Endothelial cell of umbilical vein (primary cell): ENCODE measurements at regions of chr2 and their contacts with region 1.

Region 1: GRCh38 chr2:36322108-36322507 is 33.5 kb upstream of the CRIM1 start:
- DNase-seq: peak; percentile 70
- H3K4me3 ChIP-seq: no peak overlapping the region
- H3K27ac ChIP-seq: no peak overlapping the region
- H3K4me1 ChIP-seq: no peaks in the 10 kb centered on the region
- H3K27me3 ChIP-seq: peaks cover 3% of the 10 kb centered on the region in 2 experiments
- CTCF ChIP-seq: peak; percentile 28 to 60
- POLR2A ChIP-seq: no peak

Region 2: GRCh38 chr2:35871672-35872071 is 450.4 kb before region 1 on chr2:
- CTCF ChIA-PET with region 1: interaction called, 14 read pairs
- POLR2A ChIA-PET with region 1: no interaction called
- dilution Hi-C with region 1: no loop called
- intact Hi-C with region 1: loop called (anchors 5 kb)
- DNase-seq: peak; percentile 4
- H3K4me3 ChIP-seq: no peak overlapping the region
- H3K27ac ChIP-seq: no peak overlapping the region
- H3K4me1 ChIP-seq: no peaks in the 10 kb centered on the region
- H3K27me3 ChIP-seq: peaks cover 3 to 4% of the 10 kb centered on the region in 2 experiments
- CTCF ChIP-seq: peak in 1 of 2 donors; percentile 20
- POLR2A ChIP-seq: no peak

Region 3: DNA sequence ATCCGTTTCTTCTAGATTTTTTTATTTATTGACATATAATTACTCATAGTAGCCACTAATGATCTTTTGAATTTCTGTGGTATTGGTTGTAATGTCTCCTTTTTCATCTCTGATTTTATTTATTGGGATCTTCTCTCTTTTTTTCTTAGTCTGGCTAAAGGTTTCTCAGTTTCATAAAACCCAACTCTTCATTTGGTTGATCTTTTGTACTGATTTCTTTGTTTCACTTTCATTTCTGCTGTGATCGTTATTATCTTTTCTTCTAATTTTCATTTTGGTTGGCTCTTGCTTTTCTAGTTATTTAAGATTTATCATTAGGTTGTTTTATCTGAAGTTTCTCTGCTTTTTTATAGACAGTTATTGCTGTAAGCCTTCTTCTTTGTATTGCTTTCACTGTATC is 430.2 kb before region 1 on chr2:
- CTCF ChIA-PET with region 1: interaction called, 14 read pairs
- POLR2A ChIA-PET with region 1: no interaction called
- dilution Hi-C with region 1: no loop called
- intact Hi-C with region 1: loop called (anchors 1 kb)
- DNase-seq: no peak
- H3K4me3 ChIP-seq: no peak overlapping the region
- H3K27ac ChIP-seq: no peak overlapping the region
- H3K4me1 ChIP-seq: no peaks in the 10 kb centered on the region
- H3K27me3 ChIP-seq: no peaks in the 10 kb centered on the region
- CTCF ChIP-seq: no peak
- POLR2A ChIP-seq: no peak

Region 4: GRCh38 chr2:36307441-36307840 is 14.7 kb before region 1 on chr2:
- CTCF ChIA-PET with region 1: interaction called, 14 read pairs
- POLR2A ChIA-PET with region 1: no interaction called
- dilution Hi-C with region 1: no loop called
- intact Hi-C with region 1: no loop called
- DNase-seq: no peak
- H3K4me3 ChIP-seq: no peak overlapping the region
- H3K27ac ChIP-seq: no peak overlapping the region
- H3K4me1 ChIP-seq: no peaks in the 10 kb centered on the region
- H3K27me3 ChIP-seq: peaks cover 4 to 5% of the 10 kb centered on the region in 2 experiments
- CTCF ChIP-seq: no peak
- POLR2A ChIP-seq: no peak

Region 5: DNA sequence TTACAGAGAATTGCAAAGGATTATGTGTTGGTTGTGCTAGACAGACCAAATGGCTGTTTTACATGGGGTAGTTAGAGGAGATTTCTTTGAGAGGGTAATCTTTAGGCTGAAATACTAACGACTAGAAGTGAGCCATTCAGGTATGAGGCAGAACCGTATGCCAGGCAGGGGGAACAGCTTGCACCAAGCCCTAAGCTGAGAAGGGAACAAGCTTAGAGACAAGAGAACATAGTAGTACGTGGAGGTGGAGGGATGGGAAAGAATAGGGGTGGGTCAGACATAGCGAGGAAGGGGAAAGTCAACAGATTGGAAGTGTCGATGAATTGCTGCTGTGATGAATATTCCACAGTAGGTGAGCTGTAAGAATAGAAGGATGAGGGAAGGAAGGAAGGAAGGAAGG is 13.5 kb after region 1 on chr2:
- CTCF ChIA-PET with region 1: interaction called, 11 read pairs
- POLR2A ChIA-PET with region 1: no interaction called
- dilution Hi-C with region 1: no loop called
- intact Hi-C with region 1: no loop called
- DNase-seq: no peak
- H3K4me3 ChIP-seq: no peak overlapping the region
- H3K27ac ChIP-seq: no peak overlapping the region
- H3K4me1 ChIP-seq: peaks cover 7% of the 10 kb centered on the region
- H3K27me3 ChIP-seq: no peaks in the 10 kb centered on the region
- CTCF ChIP-seq: no peak
- POLR2A ChIP-seq: no peak

Region 6: DNA sequence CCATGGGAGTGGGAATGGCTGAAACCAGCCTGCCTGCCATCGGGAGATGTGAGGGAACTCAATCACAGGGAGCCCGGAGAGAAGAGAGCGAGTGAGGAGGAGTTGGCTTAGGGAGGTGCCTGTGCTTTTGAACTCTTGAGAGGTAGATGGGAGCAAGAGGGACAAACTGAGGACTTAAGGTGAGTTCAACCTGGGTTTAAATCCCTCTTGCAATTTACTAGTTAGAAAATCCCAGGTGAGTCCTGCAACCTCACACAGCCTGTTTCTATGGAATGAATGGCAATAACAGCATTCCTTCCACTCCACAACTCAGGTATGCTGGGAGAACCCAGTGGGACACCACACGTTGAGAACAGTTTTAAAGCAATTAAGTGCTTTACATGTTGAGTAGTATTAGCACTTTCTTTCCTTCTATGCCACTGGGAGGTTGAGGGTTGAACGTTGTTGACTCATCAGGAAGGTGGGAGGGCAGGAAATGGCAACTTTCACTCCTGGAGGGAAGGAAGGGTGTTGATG is 431.7 kb after region 1 on chr2:
- CTCF ChIA-PET with region 1: no interaction called
- POLR2A ChIA-PET with region 1: no interaction called
- dilution Hi-C with region 1: no loop called
- intact Hi-C with region 1: no loop called
- DNase-seq: peak; percentile 43
- H3K4me3 ChIP-seq: no peak overlapping the region
- H3K27ac ChIP-seq: no peak overlapping the region
- H3K4me1 ChIP-seq: peaks cover 6% of the 10 kb centered on the region
- H3K27me3 ChIP-seq: peaks cover under 1 to 2% of the 10 kb centered on the region in 2 experiments
- CTCF ChIP-seq: no peak
- POLR2A ChIP-seq: no peak